ENCODE measurements at regions of chr1 and their contacts with region 1.

Region 1: GRCh38 chr1:172745014-172745413 is 86.1 kb downstream of the FASLG start:
- DNase-seq: peak; percentile 49
- CTCF ChIP-seq: peak; percentile 67

Region 2: DNA sequence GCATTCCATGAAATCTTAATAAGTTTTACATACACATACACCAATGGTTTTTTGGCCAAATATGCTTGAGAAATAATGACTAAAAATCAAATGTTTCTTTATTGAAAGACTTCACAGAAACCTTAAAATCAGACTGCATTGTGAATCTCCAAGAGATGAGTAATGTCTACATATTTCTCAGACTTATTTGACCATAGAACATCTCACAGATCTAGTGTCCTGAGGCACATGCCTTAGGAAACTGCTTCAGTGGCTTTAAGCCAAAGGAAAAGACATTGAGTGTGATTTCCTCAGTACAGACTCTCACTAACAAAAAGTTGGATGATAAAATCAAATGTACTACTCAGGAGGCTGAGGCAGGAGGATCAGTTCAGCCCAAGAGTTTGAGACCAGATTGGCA is 330.7 kb before region 1 on chr1:
- CTCF ChIA-PET with region 1: no interaction called
- POLR2A ChIA-PET with region 1: no interaction called
- DNase-seq: no peak
- CTCF ChIP-seq: no peak

Region 3: DNA sequence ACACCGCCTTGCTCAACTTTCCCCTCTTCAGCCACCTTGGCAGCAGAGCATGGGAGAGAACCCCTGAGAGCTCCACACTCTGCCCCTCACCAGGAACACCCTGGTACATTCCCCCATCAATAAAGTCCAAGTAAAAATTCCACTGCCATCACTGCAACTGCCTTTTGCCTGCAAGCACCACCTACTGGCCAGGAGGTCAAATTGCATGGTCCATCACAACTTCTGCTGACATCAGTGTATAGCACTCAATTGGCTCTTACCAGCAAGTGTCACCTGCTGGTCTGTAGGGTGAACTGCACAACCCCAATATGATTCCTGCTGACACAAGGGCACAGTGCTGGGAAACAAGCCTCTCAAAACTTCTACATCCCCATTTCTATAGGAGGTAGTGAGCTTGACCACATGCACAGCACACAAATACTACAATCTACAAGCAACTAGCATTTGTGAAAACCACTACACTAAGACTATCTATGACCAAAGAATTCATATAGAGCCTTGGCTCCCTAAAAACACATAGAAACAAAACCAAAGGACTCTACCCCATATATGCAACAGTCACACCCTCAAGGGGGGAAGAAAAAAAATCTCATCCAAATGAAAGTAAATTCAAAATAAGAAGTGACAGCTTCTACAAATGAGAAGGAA is 16.9 kb before region 1 on chr1:
- CTCF ChIA-PET with region 1: interaction called, 33 read pairs
- POLR2A ChIA-PET with region 1: no interaction called
- DNase-seq: peak; percentile 26
- CTCF ChIP-seq: peak; percentile 29

Region 4: GRCh38 chr1:172733815-172734214 is 11.2 kb before region 1 on chr1:
- CTCF ChIA-PET with region 1: interaction called, 33 read pairs
- POLR2A ChIA-PET with region 1: no interaction called
- DNase-seq: no peak
- CTCF ChIP-seq: no peak

Region 5: DNA sequence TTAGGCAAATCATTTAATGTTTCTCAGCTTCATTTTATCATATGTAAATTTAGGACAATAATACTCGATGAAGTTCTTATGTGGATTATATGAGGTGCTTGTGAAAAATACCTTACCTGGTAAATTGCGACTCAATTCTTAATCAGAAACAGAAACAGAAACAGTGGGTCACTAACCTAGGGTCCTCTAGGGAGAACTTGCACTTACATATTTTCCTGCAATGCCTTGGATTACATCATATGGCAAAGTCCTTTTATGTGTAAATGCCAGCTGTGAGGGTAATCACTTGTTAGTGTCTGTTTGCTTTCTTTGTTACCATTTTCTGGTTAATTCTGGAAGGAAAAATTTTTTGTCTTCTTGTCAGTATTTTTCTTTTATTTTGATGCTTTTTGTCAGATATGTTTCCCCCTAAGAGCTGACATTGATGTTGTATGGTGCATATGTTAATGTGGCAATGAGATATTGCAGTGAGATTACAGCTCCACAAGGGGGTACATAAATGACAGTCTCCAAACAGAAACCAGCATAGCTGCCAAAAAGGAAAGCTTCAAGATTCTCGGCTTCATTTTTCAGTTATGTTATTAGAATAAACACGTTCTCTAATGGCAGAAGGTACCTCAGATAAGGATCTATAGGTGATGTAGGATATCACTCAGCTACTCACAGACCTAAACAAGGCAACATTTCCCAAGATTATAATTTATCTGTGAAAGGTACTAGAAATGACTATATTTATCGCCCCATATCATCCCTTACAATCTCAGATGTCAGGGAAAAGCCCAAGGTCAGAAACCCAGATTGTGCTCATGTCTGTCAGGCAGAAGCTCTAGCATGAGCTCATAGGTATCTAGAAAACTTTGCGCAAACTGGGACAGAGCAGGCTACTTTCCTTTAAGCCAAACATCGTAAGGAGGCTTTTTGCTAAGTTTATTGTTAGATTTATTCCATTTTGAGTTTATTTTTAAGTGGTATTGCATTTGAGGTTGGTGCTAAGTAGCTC is 33.7 kb after region 1 on chr1:
- CTCF ChIA-PET with region 1: interaction called, 10 read pairs
- POLR2A ChIA-PET with region 1: no interaction called
- DNase-seq: peak; percentile 23
- CTCF ChIP-seq: peak; percentile 33

Region 6: GRCh38 chr1:173195596-173196088 is 450.6 kb after region 1 on chr1:
- CTCF ChIA-PET with region 1: interaction called, 146 read pairs
- POLR2A ChIA-PET with region 1: no interaction called
- DNase-seq: peak; percentile 25
- CTCF ChIP-seq: no peak

Region 7: GRCh38 chr1:173202430-173203145 is 457.6 kb after region 1 on chr1:
- CTCF ChIA-PET with region 1: interaction called, 146 read pairs
- POLR2A ChIA-PET with region 1: no interaction called
- DNase-seq: no peak
- CTCF ChIP-seq: peak; percentile 55

Region 8: DNA sequence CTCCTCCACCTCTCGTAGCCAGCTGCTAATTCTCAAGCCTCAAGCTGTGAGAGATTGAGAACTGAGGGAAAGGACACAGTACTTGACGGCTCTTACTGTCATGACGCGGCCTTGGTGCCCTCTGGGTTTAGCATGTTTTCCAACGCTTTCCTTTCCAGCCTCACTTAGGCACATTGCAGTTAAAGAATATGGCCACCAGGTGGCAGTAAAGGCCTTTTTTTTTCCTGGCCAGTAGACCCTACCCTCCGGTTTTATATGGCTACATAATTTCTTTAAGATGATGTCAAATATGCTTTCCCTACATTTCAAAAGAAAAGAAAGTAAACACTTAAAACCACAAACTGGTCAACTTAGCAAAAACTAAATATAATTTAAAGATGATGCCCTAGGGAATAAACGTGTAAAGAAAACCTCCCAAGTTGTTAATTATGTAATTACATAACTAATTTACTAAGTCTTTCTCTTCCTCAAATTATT is 675.4 kb after region 1 on chr1:
- CTCF ChIA-PET with region 1: interaction called, 19 read pairs
- POLR2A ChIA-PET with region 1: no interaction called
- DNase-seq: no peak
- CTCF ChIP-seq: peak; percentile 63

Measured in GM10248 (cell line).